Activated CD4-positive, alpha-beta T cell treated with anti-CD3 and anti-CD28 coated beads for 36 hours (primary cell): ENCODE measurements at regions of chr11 and their contacts with region 1.

Region 1: GRCh38 chr11:60363542-60364510 is 14.5 kb upstream of the MS4A7 start:
- DNase-seq: peak; percentile 74
- ATAC-seq: peak; percentile 69
- H3K4me3 Mint-ChIP-seq: no peak overlapping the region
- H3K27ac Mint-ChIP-seq: no peak overlapping the region
- H3K4me1 Mint-ChIP-seq: peaks cover 4% of the 10 kb centered on the region
- H3K27me3 Mint-ChIP-seq: peaks cover 35% of the 10 kb centered on the region

Region 2: DNA sequence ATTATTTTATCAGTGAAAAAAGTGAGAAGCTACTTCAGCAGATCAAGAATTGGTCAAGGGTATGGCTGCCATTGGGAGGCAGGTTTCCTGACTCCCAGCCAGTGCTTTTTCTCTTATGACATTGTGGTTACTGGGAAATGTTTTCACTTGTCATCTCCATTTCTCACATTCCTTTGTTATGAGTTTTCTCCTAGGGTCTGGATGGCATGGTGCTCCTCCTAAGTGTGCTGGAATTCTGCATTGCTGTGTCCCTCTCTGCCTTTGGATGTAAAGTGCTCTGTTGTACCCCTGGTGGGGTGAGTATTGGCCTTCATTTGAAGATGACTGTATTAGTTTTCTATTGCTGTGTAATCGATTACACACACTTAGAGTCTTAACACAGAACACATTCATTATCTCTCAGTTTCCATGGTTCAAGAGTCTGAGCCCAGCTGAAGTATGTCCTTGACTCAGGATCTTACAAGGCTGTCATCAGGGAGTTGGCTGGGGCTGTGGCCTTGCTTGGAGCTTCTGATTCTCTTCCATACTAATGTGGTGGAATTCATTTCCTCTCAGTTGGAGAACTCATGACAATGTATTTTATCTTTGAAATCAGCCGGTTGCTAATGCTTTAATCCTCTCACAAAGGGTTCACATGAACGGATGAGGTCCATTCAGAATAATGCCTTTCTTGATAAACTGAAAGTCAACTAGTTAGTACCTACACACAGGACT is 57.8 kb before region 1 on chr11:
- CTCF ChIA-PET with region 1: interaction called, 3 read pairs
- POLR2A ChIA-PET with region 1: no interaction called
- intact Hi-C with region 1: loop called in 1 of 2 experiments (anchors 2 kb)
- DNase-seq: no peak
- ATAC-seq: no peak
- H3K4me3 Mint-ChIP-seq: no peak overlapping the region
- H3K27ac Mint-ChIP-seq: no peak overlapping the region
- H3K4me1 Mint-ChIP-seq: peaks cover 32% of the 10 kb centered on the region
- H3K27me3 Mint-ChIP-seq: peaks cover 23% of the 10 kb centered on the region

Region 3: GRCh38 chr11:60345489-60345888 is 18.3 kb before region 1 on chr11:
- CTCF ChIA-PET with region 1: interaction called, 13 read pairs
- POLR2A ChIA-PET with region 1: no interaction called
- intact Hi-C with region 1: no loop called
- DNase-seq: peak; percentile 65
- ATAC-seq: no peak
- H3K4me3 Mint-ChIP-seq: no peak overlapping the region
- H3K27ac Mint-ChIP-seq: no peak overlapping the region
- H3K4me1 Mint-ChIP-seq: no peaks in the 10 kb centered on the region
- H3K27me3 Mint-ChIP-seq: peaks cover 25% of the 10 kb centered on the region

Region 4: GRCh38 chr11:60485986-60486385 is 122.2 kb after region 1 on chr11:
- CTCF ChIA-PET with region 1: interaction called, 8 read pairs
- POLR2A ChIA-PET with region 1: no interaction called
- intact Hi-C with region 1: loop called (anchors 1 kb)
- DNase-seq: peak; percentile 46
- ATAC-seq: peak; percentile 74
- H3K4me3 Mint-ChIP-seq: no peak overlapping the region
- H3K27ac Mint-ChIP-seq: no peak overlapping the region
- H3K4me1 Mint-ChIP-seq: peaks cover 3% of the 10 kb centered on the region
- H3K27me3 Mint-ChIP-seq: peaks cover 2% of the 10 kb centered on the region

Region 5: GRCh38 chr11:60615497-60615896 is 251.7 kb after region 1 on chr11:
- CTCF ChIA-PET with region 1: interaction called, 28 read pairs
- POLR2A ChIA-PET with region 1: no interaction called
- intact Hi-C with region 1: loop called (anchors 1 kb)
- DNase-seq: no peak
- ATAC-seq: no peak
- H3K4me3 Mint-ChIP-seq: no peak overlapping the region
- H3K27ac Mint-ChIP-seq: no peak overlapping the region
- H3K4me1 Mint-ChIP-seq: no peaks in the 10 kb centered on the region
- H3K27me3 Mint-ChIP-seq: peaks cover 8% of the 10 kb centered on the region

Region 6: DNA sequence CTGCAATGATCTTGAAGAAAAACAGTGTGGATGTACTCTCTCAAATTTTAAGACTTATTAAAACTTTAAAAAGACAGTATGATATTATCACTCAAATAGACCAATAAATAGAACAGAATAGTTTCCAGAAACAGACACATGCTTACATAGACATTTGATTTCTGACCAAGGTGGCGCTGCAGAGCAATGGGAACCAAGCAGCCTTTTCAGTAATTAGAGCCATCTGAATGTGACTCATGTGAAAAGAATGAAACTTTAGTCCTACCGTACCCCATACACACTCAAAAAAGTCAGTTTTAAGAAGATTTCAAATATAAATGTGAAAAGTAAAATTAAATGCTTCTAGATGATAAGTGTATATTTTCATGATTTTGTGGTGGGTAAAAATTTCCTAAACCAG is 261.4 kb after region 1 on chr11:
- CTCF ChIA-PET with region 1: interaction called, 28 read pairs
- POLR2A ChIA-PET with region 1: no interaction called
- intact Hi-C with region 1: loop called in 1 of 2 experiments (anchors 5 kb)
- DNase-seq: peak; percentile 32
- ATAC-seq: no peak
- H3K4me3 Mint-ChIP-seq: no peak overlapping the region
- H3K27ac Mint-ChIP-seq: no peak overlapping the region
- H3K4me1 Mint-ChIP-seq: no peaks in the 10 kb centered on the region
- H3K27me3 Mint-ChIP-seq: peaks cover 4% of the 10 kb centered on the region

Region 7: DNA sequence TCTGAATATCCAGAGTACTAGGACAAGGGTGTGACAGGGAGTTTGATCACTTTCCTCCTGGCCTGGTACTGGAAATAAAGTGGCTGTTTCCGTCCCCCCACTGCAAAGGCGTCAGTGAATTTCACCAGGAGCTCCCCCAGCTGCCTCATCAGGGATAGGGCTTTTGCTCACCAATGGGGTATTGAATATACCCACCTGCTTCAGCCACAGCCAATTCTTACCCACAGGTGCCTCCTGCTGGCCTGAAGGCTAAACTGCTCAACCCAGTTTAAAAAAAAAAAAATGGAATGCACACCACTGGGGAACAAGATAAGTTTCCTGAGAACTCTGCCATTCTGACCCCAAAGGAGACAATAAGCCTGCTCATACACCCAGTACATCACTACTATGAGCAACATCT is 270.3 kb after region 1 on chr11:
- CTCF ChIA-PET with region 1: interaction called, 6 read pairs
- POLR2A ChIA-PET with region 1: no interaction called
- intact Hi-C with region 1: loop called in 1 of 2 experiments (anchors 5 kb)
- DNase-seq: peak; percentile 7
- ATAC-seq: no peak
- H3K4me3 Mint-ChIP-seq: no peak overlapping the region
- H3K27ac Mint-ChIP-seq: no peak overlapping the region
- H3K4me1 Mint-ChIP-seq: no peaks in the 10 kb centered on the region
- H3K27me3 Mint-ChIP-seq: peaks cover 26% of the 10 kb centered on the region